ENCODE measurements at regions of chr16 and their contacts with region 1.

Region 1: GRCh38 chr16:81403616-81404373 is 40.8 kb upstream of the CMIP start:
- DNase-seq: no peak
- H3K4me3 ChIP-seq: peak overlapping the region in 3 of 4 donors; percentile 23 to 58 (median 31)
- H3K27ac ChIP-seq: peak overlapping the region in 3 of 4 donors; percentile 17 to 42 (median 34)
- H3K4me1 ChIP-seq: peaks cover 8 to 43% (median 36%) of the 10 kb centered on the region in 3 donors
- H3K27me3 ChIP-seq: no peaks in the 10 kb centered on the region
- CTCF ChIP-seq: peak; percentile 91 to 98 (median 96)
- POLR2A ChIP-seq: no peak

Region 2: GRCh38 chr16:81481207-81481821 is 77.5 kb after region 1 on chr16:
- intact Hi-C with region 1: no loop called
- DNase-seq: peak; percentile 38
- H3K4me3 ChIP-seq: no peak overlapping the region
- H3K27ac ChIP-seq: peak overlapping the region in 3 of 4 donors; percentile 7 to 61 (median 53)
- H3K4me1 ChIP-seq: peaks cover 27 to 98% (median 29%) of the 10 kb centered on the region in 3 donors
- H3K27me3 ChIP-seq: no peaks in the 10 kb centered on the region
- CTCF ChIP-seq: no peak
- POLR2A ChIP-seq: peak in 1 of 4 donors; percentile 27

Region 3: GRCh38 chr16:81729451-81729850 is 325.7 kb after region 1 on chr16:
- intact Hi-C with region 1: loop called (anchors 5 kb)
- DNase-seq: no peak
- H3K4me3 ChIP-seq: no peak overlapping the region
- H3K27ac ChIP-seq: no peak overlapping the region
- H3K4me1 ChIP-seq: peaks cover 10 to 19% (median 13%) of the 10 kb centered on the region in 3 donors
- H3K27me3 ChIP-seq: no peaks in the 10 kb centered on the region
- CTCF ChIP-seq: no peak
- POLR2A ChIP-seq: no peak

Measured in esophagus squamous epithelium (tissue), 5 donors.